CD4-positive, alpha-beta memory T cell (primary cell): ENCODE measurements at regions of chr5 and their contacts with region 1.

Region 1: GRCh38 chr5:180831139-180832048 is 28.8 kb upstream of the MGAT1 start:
- DNase-seq: peak; percentile 67 to 81 (median 72)
- H3K4me3 ChIP-seq: peak overlapping the region; percentile 59 to 83
- H3K4me3 Mint-ChIP-seq: peak overlapping the region; percentile 94 to 99 (median 98)
- H3K27ac ChIP-seq: peak overlapping the region; percentile 94
- H3K27ac Mint-ChIP-seq: peak overlapping the region; percentile 97 to 99 (median 98)
- H3K4me1 ChIP-seq: peaks cover 51% of the 10 kb centered on the region
- H3K4me1 Mint-ChIP-seq: peaks cover 33 to 66% (median 50%) of the 10 kb centered on the region in 4 donors
- H3K27me3 ChIP-seq: no peaks in the 10 kb centered on the region
- H3K27me3 Mint-ChIP-seq: no peaks in the 10 kb centered on the region

Region 2: DNA sequence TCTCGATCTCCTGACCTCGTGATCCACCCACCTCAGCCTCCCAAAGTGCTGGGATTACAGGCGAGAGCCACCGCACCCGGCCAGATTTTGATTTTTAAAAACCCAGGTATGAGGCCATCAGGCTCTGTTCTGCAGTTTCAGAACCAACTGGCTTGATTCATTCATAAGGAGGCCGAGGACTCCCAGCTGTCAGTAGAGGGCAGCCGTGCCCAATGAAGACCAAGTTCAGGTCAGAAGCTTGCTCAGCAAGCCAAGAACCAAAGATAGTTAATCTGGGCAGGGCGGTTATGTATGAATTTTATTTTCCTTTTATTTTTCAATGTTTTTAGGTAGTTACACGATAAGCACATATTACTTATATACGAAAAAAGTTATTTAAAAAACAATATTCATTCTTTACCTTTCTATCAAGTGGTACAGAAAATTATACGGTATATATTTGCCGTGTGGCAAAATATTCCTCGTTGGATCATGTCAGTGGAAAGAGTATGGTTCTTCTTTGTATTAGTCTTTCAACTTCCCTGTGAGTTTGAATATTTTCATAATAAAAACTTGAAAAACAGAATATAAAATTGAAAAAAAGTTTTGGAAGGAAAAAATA is 46.8 kb before region 1 on chr5:
- CTCF ChIA-PET with region 1: interaction called, 22 read pairs
- POLR2A ChIA-PET with region 1: interaction called, 26 read pairs
- intact Hi-C with region 1: loop called (anchors 1 kb)
- DNase-seq: peak; percentile 68 to 81 (median 72)
- H3K4me3 ChIP-seq: no peak overlapping the region
- H3K4me3 Mint-ChIP-seq: no peak overlapping the region
- H3K27ac ChIP-seq: no peak overlapping the region
- H3K27ac Mint-ChIP-seq: peak overlapping the region in 2 of 7 donors; percentile 6 to 14
- H3K4me1 ChIP-seq: peaks cover 8% of the 10 kb centered on the region
- H3K4me1 Mint-ChIP-seq: peaks cover 10 to 25% (median 18%) of the 10 kb centered on the region in 4 donors
- H3K27me3 ChIP-seq: no peaks in the 10 kb centered on the region
- H3K27me3 Mint-ChIP-seq: no peaks in the 10 kb centered on the region

Region 3: GRCh38 chr5:180802325-180803180 is 28.8 kb before region 1 on chr5 and contains the start of gene MGAT1:
- CTCF ChIA-PET with region 1: interaction called, 109 read pairs
- POLR2A ChIA-PET with region 1: interaction called, 271 read pairs
- intact Hi-C with region 1: loop called (anchors 1 kb)
- DNase-seq: peak; percentile 60 to 77 (median 66)
- H3K4me3 ChIP-seq: peak within 1 kb of the TSS; percentile 38 to 84
- H3K4me3 Mint-ChIP-seq: peak within 1 kb of the TSS; percentile 87 to 99 (median 96)
- H3K27ac ChIP-seq: peak within 1 kb of the TSS; percentile 87
- H3K27ac Mint-ChIP-seq: peak within 1 kb of the TSS; percentile 92 to 98 (median 95)
- H3K4me1 ChIP-seq: peaks cover 82% of the 10 kb centered on the region
- H3K4me1 Mint-ChIP-seq: peaks cover 66 to 93% (median 77%) of the 10 kb centered on the region in 4 donors
- H3K27me3 ChIP-seq: no peaks in the 10 kb centered on the region
- H3K27me3 Mint-ChIP-seq: no peaks in the 10 kb centered on the region
- total RNA-seq, gene MGAT1: 187 TPM

Region 4: GRCh38 chr5:180816608-180817534 is 14.5 kb before region 1 on chr5:
- CTCF ChIA-PET with region 1: interaction called, 109 read pairs
- POLR2A ChIA-PET with region 1: interaction called, 271 read pairs
- intact Hi-C with region 1: no loop called
- DNase-seq: peak in 1 of 5 donors; percentile 43
- H3K4me3 ChIP-seq: no peak overlapping the region
- H3K4me3 Mint-ChIP-seq: peak overlapping the region in 7 of 8 donors; percentile 36 to 75 (median 61)
- H3K27ac ChIP-seq: no peak overlapping the region
- H3K27ac Mint-ChIP-seq: peak overlapping the region; percentile 18 to 78 (median 49)
- H3K4me1 ChIP-seq: peaks cover 31% of the 10 kb centered on the region
- H3K4me1 Mint-ChIP-seq: peaks cover 21 to 54% (median 33%) of the 10 kb centered on the region in 4 donors
- H3K27me3 ChIP-seq: no peaks in the 10 kb centered on the region
- H3K27me3 Mint-ChIP-seq: no peaks in the 10 kb centered on the region

Region 5: GRCh38 chr5:180860887-180861822 is 29.8 kb after region 1 on chr5 and contains the start of gene ZFP62:
- CTCF ChIA-PET with region 1: interaction called, 25 read pairs
- POLR2A ChIA-PET with region 1: interaction called, 73 read pairs
- intact Hi-C with region 1: loop called (anchors 1 kb)
- DNase-seq: peak; percentile 86 to 89 (median 86)
- H3K4me3 ChIP-seq: peak within 1 kb of the TSS; percentile 36 to 96
- H3K4me3 Mint-ChIP-seq: peak within 1 kb of the TSS; percentile 90 to 95 (median 92)
- H3K27ac ChIP-seq: peak within 1 kb of the TSS; percentile 67
- H3K27ac Mint-ChIP-seq: peak within 1 kb of the TSS; percentile 96 to 98 (median 97)
- H3K4me1 ChIP-seq: peaks cover 9% of the 10 kb centered on the region
- H3K4me1 Mint-ChIP-seq: peaks cover 13 to 31% (median 19%) of the 10 kb centered on the region in 4 donors
- H3K27me3 ChIP-seq: no peaks in the 10 kb centered on the region
- H3K27me3 Mint-ChIP-seq: peaks cover 0 to 2% of the 10 kb centered on the region in 2 donors
- total RNA-seq, gene ZFP62: 71.1 to 71.7 TPM